ENCODE measurements at regions of chr18 and their contacts with region 1.

Region 1: GRCh38 chr18:50356036-50356945 is 18.6 kb upstream of the SKA1 start:
- DNase-seq: peak; percentile 30
- ATAC-seq: peak; percentile 77
- H3K4me3 Mint-ChIP-seq: no peak overlapping the region
- H3K27ac Mint-ChIP-seq: peak overlapping the region; percentile 48
- H3K4me1 Mint-ChIP-seq: peaks cover 8% of the 10 kb centered on the region
- H3K27me3 Mint-ChIP-seq: peaks cover 14% of the 10 kb centered on the region

Region 2: GRCh38 chr18:49768051-49768391 is 588.3 kb before region 1 on chr18:
- CTCF ChIA-PET with region 1: no interaction called
- POLR2A ChIA-PET with region 1: no interaction called
- intact Hi-C with region 1: no loop called
- DNase-seq: peak; percentile 52
- ATAC-seq: no peak
- H3K4me3 Mint-ChIP-seq: no peak overlapping the region
- H3K27ac Mint-ChIP-seq: no peak overlapping the region
- H3K4me1 Mint-ChIP-seq: peaks cover 7% of the 10 kb centered on the region
- H3K27me3 Mint-ChIP-seq: no peaks in the 10 kb centered on the region

Region 3: DNA sequence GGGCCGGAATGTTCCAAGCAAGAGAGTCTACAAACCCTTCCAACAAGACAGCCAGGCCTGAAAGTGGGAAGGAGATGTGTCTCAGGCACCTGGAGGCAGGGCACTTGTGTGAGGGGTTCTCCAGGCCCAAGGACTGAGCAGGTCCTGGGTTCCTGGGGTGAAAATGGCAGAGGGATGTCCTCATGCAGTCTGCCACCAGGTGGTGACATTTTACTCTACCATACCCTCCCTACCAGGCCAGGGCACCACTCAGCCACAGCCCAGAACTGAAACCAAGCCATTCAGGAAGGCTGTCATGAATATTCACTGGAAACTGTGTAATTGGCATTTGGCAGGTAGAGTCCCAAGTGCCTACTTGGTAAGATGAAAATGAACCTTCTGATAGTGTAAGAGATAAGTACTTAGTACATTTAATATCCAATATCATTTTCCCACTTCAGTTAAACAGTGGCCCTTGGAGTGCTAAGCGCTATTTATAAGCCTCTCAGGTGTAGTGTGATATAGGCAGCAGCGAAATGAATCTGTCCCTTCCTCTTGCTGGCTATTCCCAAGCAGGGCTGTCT is 346.4 kb before region 1 on chr18:
- CTCF ChIA-PET with region 1: no interaction called
- POLR2A ChIA-PET with region 1: no interaction called
- intact Hi-C with region 1: loop called (anchors 5 to 10 kb)
- DNase-seq: peak; percentile 67
- ATAC-seq: peak; percentile 95
- H3K4me3 Mint-ChIP-seq: no peak overlapping the region
- H3K27ac Mint-ChIP-seq: no peak overlapping the region
- H3K4me1 Mint-ChIP-seq: no peaks in the 10 kb centered on the region
- H3K27me3 Mint-ChIP-seq: peaks cover 3% of the 10 kb centered on the region

Region 4: GRCh38 chr18:50203801-50204604 is 152.3 kb before region 1 on chr18:
- CTCF ChIA-PET with region 1: interaction called, 5 read pairs
- POLR2A ChIA-PET with region 1: no interaction called
- intact Hi-C with region 1: loop called (anchors 5 kb)
- DNase-seq: peak; percentile 56
- ATAC-seq: no peak
- H3K4me3 Mint-ChIP-seq: no peak overlapping the region
- H3K27ac Mint-ChIP-seq: no peak overlapping the region
- H3K4me1 Mint-ChIP-seq: peaks cover 9% of the 10 kb centered on the region
- H3K27me3 Mint-ChIP-seq: peaks cover 43% of the 10 kb centered on the region

Region 5: DNA sequence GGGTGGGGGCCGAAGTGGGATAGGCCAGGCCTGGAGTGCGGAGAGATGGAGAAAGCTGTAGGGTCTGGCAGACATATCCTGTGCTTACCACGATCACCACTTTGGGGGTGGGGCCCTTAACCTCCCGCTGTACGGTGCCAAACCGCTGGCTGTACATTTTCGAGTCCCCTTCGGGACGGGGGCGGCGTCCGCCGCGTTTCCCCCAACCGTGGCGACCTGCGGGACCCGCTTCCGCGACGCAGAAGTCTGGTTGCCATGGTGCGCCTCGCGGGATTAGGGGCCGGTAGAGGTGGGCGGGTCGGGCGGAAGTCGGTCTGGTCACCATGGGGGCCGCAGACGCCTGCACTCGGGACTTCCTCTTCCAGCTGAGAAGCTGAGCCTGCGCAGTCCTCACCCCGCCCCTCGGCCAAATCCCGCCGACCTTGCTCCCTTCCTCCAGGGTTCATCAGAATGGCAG is 90.0 kb before region 1 on chr18 and contains the start of gene CFAP53:
- CTCF ChIA-PET with region 1: interaction called, 5 read pairs
- POLR2A ChIA-PET with region 1: no interaction called
- intact Hi-C with region 1: loop called in 1 of 2 experiments (anchors 1 kb)
- DNase-seq: peak; percentile 92
- ATAC-seq: peak; percentile 93
- H3K4me3 Mint-ChIP-seq: peak within 1 kb of the TSS; percentile 71
- H3K27ac Mint-ChIP-seq: peak within 1 kb of the TSS; percentile 57
- H3K4me1 Mint-ChIP-seq: peaks cover 20% of the 10 kb centered on the region
- H3K27me3 Mint-ChIP-seq: no peaks in the 10 kb centered on the region
- total RNA-seq, gene CFAP53: 0.37 to 0.44 TPM

Region 6: GRCh38 chr18:50307738-50308470 is 48.4 kb before region 1 on chr18:
- CTCF ChIA-PET with region 1: no interaction called
- POLR2A ChIA-PET with region 1: no interaction called
- intact Hi-C with region 1: loop called in 1 of 2 experiments (anchors 5 kb)
- DNase-seq: peak; percentile 95
- ATAC-seq: peak; percentile 99
- H3K4me3 Mint-ChIP-seq: peak overlapping the region; percentile 73
- H3K27ac Mint-ChIP-seq: peak overlapping the region; percentile 37
- H3K4me1 Mint-ChIP-seq: peaks cover 11% of the 10 kb centered on the region
- H3K27me3 Mint-ChIP-seq: peaks cover 3% of the 10 kb centered on the region

Region 7: GRCh38 chr18:50429207-50429948 is 73.1 kb after region 1 on chr18:
- CTCF ChIA-PET with region 1: interaction called, 13 read pairs
- POLR2A ChIA-PET with region 1: no interaction called
- intact Hi-C with region 1: no loop called
- DNase-seq: no peak
- ATAC-seq: no peak
- H3K4me3 Mint-ChIP-seq: no peak overlapping the region
- H3K27ac Mint-ChIP-seq: no peak overlapping the region
- H3K4me1 Mint-ChIP-seq: no peaks in the 10 kb centered on the region
- H3K27me3 Mint-ChIP-seq: peaks cover 20% of the 10 kb centered on the region

Measured in activated CD4-positive, alpha-beta T cell treated with anti-CD3 and anti-CD28 coated beads for 36 hours (primary cell).